Activated CD4-positive, alpha-beta T cell treated with anti-CD3 and anti-CD28 coated beads for 36 hours (primary cell): ENCODE measurements at regions of chr4 and their contacts with region 1.

Region 1: DNA sequence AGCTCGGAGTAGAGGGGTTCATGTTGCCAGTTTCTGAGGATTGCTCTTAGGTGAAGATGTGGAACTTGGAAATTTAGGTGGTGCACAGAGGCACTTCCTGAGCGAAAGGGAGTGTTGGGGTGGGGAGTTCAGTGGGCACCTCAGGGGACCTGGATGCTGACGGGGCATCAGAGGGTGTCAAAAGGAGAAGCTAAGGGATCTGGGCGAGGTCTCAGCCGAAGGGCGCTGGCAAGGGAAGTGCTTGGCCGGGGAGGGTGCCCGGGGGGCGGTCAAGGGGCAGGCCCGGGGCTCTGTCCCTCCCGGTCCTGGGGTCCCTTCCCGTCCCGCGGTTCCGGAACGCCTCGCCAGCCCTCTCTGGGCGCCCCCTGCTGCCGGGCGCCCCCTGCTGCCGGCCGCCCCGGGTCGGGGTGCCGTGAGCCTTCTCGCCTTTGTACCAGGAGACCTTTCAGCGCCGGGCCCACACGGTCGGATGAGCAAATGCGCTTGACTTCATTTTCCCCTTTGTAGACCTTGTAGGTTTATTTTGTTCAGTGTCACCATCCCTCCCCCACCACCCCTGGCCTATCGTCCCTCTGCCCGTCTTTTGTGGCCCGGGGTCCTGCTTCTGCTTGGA is 3.0 kb upstream of the PHOX2B start:
- DNase-seq: peak; percentile 31
- ATAC-seq: no peak
- H3K4me3 Mint-ChIP-seq: no peak overlapping the region
- H3K27ac Mint-ChIP-seq: no peak overlapping the region
- H3K4me1 Mint-ChIP-seq: no peaks in the 10 kb centered on the region
- H3K27me3 Mint-ChIP-seq: peaks cover 70% of the 10 kb centered on the region

Region 2: DNA sequence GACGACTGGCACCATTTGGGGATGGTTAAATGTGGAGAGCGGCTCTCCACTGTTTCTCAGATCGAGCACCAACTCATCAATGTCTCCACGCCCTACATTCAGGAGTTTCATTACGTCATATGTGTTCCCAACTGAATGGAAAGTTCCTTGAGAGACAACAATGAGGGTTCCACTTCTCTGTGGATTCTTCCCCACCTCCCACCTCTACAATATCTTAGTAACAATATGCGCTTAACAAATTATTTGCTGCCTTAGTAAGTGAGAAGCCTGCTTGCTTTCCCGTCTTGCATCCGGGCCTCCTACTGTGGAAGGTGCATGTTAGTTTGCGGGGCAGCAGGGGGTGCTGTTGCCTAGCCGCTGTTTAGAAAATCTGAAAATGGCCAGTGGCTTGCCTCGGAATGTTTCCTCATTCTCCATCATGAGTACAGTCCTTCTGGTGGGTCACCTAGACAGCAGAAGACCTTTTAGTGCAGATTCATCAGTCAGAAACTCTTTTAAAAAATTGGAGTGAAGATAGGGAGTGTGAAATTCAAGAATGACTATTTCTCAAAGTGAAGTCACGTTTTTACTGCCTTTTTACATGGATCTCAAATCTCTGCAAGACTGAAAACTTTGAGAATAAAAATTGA is 58.7 kb before region 1 on chr4:
- CTCF ChIA-PET with region 1: interaction called, 3 read pairs
- POLR2A ChIA-PET with region 1: no interaction called
- intact Hi-C with region 1: loop called (anchors 5 kb)
- DNase-seq: peak; percentile 67
- ATAC-seq: peak; percentile 58
- H3K4me3 Mint-ChIP-seq: no peak overlapping the region
- H3K27ac Mint-ChIP-seq: no peak overlapping the region
- H3K4me1 Mint-ChIP-seq: no peaks in the 10 kb centered on the region
- H3K27me3 Mint-ChIP-seq: peaks cover 10% of the 10 kb centered on the region

Region 3: DNA sequence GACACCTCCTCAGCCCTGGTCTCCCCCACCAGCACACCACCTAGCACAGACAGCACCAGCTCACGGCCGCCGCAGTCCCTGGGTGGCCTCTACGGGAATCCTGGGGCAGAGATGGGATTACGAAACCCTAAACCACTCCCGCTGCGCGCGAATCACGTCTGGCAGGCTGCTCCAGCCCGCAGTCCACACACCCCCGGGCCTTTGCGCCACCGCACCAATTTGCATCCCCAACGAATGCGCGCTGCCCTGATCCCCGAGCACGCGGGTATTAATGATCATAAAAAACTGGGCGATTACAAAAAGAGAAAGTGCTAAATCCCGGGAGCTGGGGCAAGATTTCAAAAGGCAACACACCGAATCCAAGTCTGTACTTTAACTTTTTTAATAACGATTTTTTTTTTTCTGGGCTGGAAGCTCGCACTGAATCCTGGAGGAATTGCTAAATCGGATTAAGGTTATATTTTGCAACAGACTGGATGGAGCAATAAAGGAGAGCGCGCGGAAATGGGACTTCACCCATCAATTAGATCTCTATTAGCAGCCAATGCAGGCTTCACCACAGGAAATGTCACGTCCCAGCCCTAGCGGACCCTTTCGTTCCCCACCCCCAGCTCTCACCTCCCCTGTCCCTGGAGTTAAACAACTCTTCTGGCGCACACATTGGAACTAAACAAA is 113.9 kb after region 1 on chr4:
- CTCF ChIA-PET with region 1: no interaction called
- POLR2A ChIA-PET with region 1: no interaction called
- intact Hi-C with region 1: loop called in 1 of 2 experiments (anchors 2 kb)
- DNase-seq: no peak
- ATAC-seq: no peak
- H3K4me3 Mint-ChIP-seq: no peak overlapping the region
- H3K27ac Mint-ChIP-seq: no peak overlapping the region
- H3K4me1 Mint-ChIP-seq: peaks cover 16% of the 10 kb centered on the region
- H3K27me3 Mint-ChIP-seq: peaks cover 60% of the 10 kb centered on the region

Region 4: GRCh38 chr4:42397635-42398447 is 646.3 kb after region 1 on chr4:
- CTCF ChIA-PET with region 1: no interaction called
- POLR2A ChIA-PET with region 1: no interaction called
- intact Hi-C with region 1: loop called in 1 of 2 experiments (anchors 10 kb)
- DNase-seq: peak; percentile 57
- ATAC-seq: peak; percentile 63
- H3K4me3 Mint-ChIP-seq: peak overlapping the region; percentile 65
- H3K27ac Mint-ChIP-seq: no peak overlapping the region
- H3K4me1 Mint-ChIP-seq: peaks cover 22% of the 10 kb centered on the region
- H3K27me3 Mint-ChIP-seq: peaks cover 58% of the 10 kb centered on the region